CD8-positive, alpha-beta T cell (primary cell): ENCODE measurements at regions of chr16 and their contacts with region 1.

Region 1: GRCh38 chr16:53549970-53550690 is 47.1 kb upstream of the AKTIP start:
- DNase-seq: peak; percentile 13 to 82 (median 52)
- ATAC-seq: peak; percentile 73
- H3K4me3 ChIP-seq: no peak overlapping the region
- H3K4me3 Mint-ChIP-seq: no peak overlapping the region
- H3K27ac ChIP-seq: no peak overlapping the region
- H3K27ac Mint-ChIP-seq: no peak overlapping the region
- H3K4me1 ChIP-seq: peaks cover 9% of the 10 kb centered on the region
- H3K4me1 Mint-ChIP-seq: peaks cover 22% of the 10 kb centered on the region
- H3K27me3 ChIP-seq: no peaks in the 10 kb centered on the region
- H3K27me3 Mint-ChIP-seq: peaks cover 26% of the 10 kb centered on the region
- CTCF ChIP-seq: peak; percentile 93

Region 2: DNA sequence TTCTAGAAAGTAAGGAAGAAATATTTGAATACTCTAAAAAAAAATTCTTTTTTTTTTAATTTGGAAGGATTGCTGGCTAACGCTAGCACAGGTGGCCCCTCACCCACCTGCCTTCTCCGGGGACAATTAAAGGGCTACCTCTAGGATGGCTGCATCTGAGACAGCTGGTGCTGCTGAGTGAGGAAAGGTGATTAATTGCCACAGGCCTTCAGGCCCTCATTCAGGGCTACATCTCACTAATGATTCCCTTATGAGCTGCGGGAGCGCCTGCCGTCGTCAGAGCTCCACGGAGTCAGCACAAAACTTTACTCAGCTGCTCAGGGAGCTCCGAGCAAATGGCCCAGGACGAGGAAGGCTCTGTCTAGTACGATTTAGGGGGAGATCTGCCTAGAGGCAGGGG is 20.1 kb before region 1 on chr16:
- CTCF ChIA-PET with region 1: interaction called, 14 read pairs
- POLR2A ChIA-PET with region 1: no interaction called
- intact Hi-C with region 1: no loop called
- DNase-seq: no peak
- ATAC-seq: no peak
- H3K4me3 ChIP-seq: no peak overlapping the region
- H3K4me3 Mint-ChIP-seq: no peak overlapping the region
- H3K27ac ChIP-seq: no peak overlapping the region
- H3K27ac Mint-ChIP-seq: peak overlapping the region; percentile 6
- H3K4me1 ChIP-seq: no peaks in the 10 kb centered on the region
- H3K4me1 Mint-ChIP-seq: peaks cover 6% of the 10 kb centered on the region
- H3K27me3 ChIP-seq: no peaks in the 10 kb centered on the region
- H3K27me3 Mint-ChIP-seq: no peaks in the 10 kb centered on the region
- CTCF ChIP-seq: no peak

Region 3: GRCh38 chr16:53703590-53704444 is 153.7 kb after region 1 on chr16 and contains the starts of genes FTO and RPGRIP1L:
- CTCF ChIA-PET with region 1: no interaction called
- POLR2A ChIA-PET with region 1: interaction called, 5 read pairs
- intact Hi-C with region 1: loop called in 1 of 2 experiments (anchors 5 kb)
- DNase-seq: peak; percentile 89 to 98 (median 95)
- ATAC-seq: peak; percentile 90
- H3K4me3 ChIP-seq: peak within 1 kb of the TSS; percentile 75 to 86
- H3K4me3 Mint-ChIP-seq: peak within 1 kb of the TSS; percentile 96
- H3K27ac ChIP-seq: peak within 1 kb of the TSS; percentile 61 to 68
- H3K27ac Mint-ChIP-seq: peak within 1 kb of the TSS; percentile 95
- H3K4me1 ChIP-seq: peaks cover 21% of the 10 kb centered on the region
- H3K4me1 Mint-ChIP-seq: peaks cover 48% of the 10 kb centered on the region
- H3K27me3 ChIP-seq: no peaks in the 10 kb centered on the region
- H3K27me3 Mint-ChIP-seq: no peaks in the 10 kb centered on the region
- CTCF ChIP-seq: no peak
- total RNA-seq, gene FTO: 30.4 to 32.9 TPM
- total RNA-seq, gene RPGRIP1L: 1.5 to 2.2 TPM

Region 4: DNA sequence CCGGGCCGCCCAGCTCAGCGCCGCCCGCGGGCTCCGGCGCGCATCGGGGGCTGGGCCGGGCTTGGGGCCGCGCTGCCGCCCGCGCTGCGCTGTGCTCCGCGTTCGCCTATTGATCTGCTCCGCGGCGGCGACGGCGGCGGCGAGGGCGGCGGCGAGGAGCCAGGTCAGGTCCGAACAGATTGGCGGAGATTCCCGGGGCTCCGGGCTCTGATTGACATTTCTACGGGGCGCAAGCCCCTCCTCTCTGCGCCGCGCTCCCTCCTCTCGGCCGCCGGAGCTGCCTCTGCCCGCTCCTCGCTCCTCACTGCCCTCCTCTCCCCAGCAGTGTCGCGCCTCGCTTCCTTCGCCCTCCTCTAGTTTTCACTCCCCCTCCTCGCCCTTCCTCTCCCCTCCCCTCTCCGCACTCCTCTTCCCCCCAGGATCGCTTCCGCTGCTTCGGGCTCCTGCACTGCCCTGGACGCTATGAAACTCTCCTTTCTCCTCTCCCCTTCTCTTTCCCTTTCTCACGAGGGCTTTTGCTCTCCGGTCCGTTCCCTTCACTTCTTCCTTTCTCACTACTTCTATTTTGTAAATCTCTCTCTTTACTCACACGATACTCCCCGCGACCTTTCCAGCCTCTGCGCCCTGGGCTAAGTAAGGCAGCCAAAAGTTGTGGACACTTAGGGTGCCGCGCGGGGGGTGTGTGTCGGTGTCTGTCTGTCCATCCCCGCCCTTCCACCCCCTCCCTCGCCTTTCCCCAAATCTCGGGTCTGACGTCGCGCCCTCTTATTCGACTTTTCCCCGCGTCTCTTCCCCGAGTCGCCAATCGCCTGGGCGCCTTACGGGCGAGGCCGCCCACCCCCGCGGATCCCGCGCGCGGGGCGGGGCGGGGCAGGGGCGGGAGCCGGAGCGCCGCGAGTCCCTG is 736.2 kb after region 1 on chr16 and contains the start of gene IRX3:
- CTCF ChIA-PET with region 1: no interaction called
- POLR2A ChIA-PET with region 1: no interaction called
- intact Hi-C with region 1: no loop called
- DNase-seq: no peak
- ATAC-seq: no peak
- H3K4me3 ChIP-seq: no peak within 1 kb of the TSS
- H3K4me3 Mint-ChIP-seq: peak within 1 kb of the TSS; percentile 56
- H3K27ac ChIP-seq: no peak within 1 kb of the TSS
- H3K27ac Mint-ChIP-seq: no peak within 1 kb of the TSS
- H3K4me1 ChIP-seq: no peaks in the 10 kb centered on the region
- H3K4me1 Mint-ChIP-seq: peaks cover 32% of the 10 kb centered on the region
- H3K27me3 ChIP-seq: peaks cover 0 to 13% of the 10 kb centered on the region in 2 experiments
- H3K27me3 Mint-ChIP-seq: peaks cover 50% of the 10 kb centered on the region
- CTCF ChIP-seq: no peak
- total RNA-seq, gene IRX3: not detected

Region 5: DNA sequence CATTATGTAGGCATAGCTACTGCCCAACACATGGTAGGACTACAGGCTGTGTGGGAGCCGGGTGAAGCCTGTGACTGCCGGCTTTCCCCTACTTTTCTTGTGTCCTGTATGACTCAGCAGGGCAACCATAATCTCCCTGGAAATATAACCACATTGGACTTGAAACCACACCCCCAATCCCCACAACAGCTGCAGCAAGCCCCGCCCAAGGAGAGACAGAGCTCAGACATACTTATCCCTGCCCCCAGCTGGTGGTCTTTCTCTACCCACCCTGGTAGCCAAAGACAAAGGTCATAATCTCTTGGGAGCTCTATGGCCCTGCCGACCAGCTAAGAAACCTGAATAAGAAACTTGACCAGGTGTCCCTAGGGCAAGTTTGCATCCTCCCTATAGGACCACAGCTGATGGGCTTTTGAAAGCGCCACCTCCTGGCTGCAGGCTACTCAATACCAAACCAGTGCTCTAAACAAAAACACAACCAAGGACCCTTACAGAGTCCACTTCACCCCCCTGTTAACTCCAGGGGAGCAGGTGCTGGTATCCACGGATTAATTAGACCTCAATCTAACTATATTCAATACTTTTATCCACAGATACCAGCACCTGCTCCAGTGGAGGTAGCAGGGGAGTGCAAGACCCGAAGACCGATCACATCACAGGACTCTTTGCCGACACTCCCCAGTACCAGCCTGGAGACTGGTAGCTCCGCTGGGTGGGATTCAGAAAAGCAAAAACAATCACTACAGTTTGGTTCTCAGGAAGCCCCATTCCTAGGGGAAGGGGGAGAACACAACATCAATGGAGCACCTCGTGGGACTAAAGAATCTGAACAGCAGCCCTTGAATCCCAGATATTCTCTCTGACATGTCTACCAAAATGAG is 1471.7 kb after region 1 on chr16:
- CTCF ChIA-PET with region 1: no interaction called
- POLR2A ChIA-PET with region 1: no interaction called
- intact Hi-C with region 1: loop called in 1 of 2 experiments (anchors 5 kb)
- DNase-seq: peak in 1 of 9 experiments; percentile 5
- ATAC-seq: no peak
- H3K4me3 ChIP-seq: no peak overlapping the region
- H3K4me3 Mint-ChIP-seq: no peak overlapping the region
- H3K27ac ChIP-seq: no peak overlapping the region
- H3K27ac Mint-ChIP-seq: no peak overlapping the region
- H3K4me1 ChIP-seq: no peaks in the 10 kb centered on the region
- H3K4me1 Mint-ChIP-seq: no peaks in the 10 kb centered on the region
- H3K27me3 ChIP-seq: peaks cover 0 to 4% of the 10 kb centered on the region in 2 experiments
- H3K27me3 Mint-ChIP-seq: peaks cover 25% of the 10 kb centered on the region
- CTCF ChIP-seq: no peak

Region 6: DNA sequence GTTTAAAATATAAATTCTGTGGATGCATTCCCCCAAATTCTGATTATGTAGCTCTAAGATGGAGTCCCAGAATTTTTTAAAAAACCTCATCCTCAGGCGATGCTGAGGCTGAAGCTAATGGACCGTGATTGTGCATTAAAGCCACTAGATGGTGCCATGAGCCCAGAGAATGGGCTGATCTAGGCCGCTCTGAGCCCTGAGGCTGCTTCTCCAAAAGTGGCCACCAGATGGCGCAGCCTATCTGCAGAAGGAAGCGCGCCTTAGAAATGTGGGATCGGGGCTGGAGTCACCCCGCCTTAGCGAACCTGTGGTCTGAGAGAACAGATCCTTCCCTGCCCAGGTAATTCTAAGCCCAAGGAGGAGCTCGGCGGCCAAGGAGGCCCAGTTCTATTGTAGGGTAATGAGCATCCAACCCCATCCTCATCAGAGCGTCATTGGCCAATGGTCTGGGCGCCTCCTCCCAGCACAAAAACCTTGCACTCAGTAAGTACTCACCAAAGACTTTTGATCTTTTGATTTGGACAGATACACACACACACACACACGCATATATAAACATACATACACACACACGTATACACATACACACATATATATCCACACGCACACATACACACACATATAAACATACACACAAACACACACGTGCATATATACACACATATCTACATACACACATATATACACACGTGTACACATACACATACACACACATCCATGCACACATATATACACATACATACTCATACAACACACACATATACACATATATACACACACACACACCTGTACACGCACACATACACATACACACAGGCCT is 1915.2 kb after region 1 on chr16:
- CTCF ChIA-PET with region 1: interaction called, 3 read pairs
- POLR2A ChIA-PET with region 1: no interaction called
- intact Hi-C with region 1: loop called in 1 of 2 experiments (anchors 2 kb)
- DNase-seq: peak; percentile 56 to 85 (median 82)
- ATAC-seq: peak; percentile 95
- H3K4me3 ChIP-seq: no peak overlapping the region
- H3K4me3 Mint-ChIP-seq: no peak overlapping the region
- H3K27ac ChIP-seq: no peak overlapping the region
- H3K27ac Mint-ChIP-seq: no peak overlapping the region
- H3K4me1 ChIP-seq: no peaks in the 10 kb centered on the region
- H3K4me1 Mint-ChIP-seq: no peaks in the 10 kb centered on the region
- H3K27me3 ChIP-seq: no peaks in the 10 kb centered on the region
- H3K27me3 Mint-ChIP-seq: no peaks in the 10 kb centered on the region
- CTCF ChIP-seq: peak; percentile 96